ENCODE measurements at regions of chr1 and their contacts with region 1.

Region 1: GRCh38 chr1:166479052-166479631 is 312.3 kb upstream of the FAM78B start:
- DNase-seq: no peak
- H3K4me3 ChIP-seq: no peak overlapping the region
- H3K27ac ChIP-seq: no peak overlapping the region
- H3K4me1 ChIP-seq: no peaks in the 10 kb centered on the region
- H3K27me3 ChIP-seq: peaks cover 0 to 3% (median 0%) of the 10 kb centered on the region in 4 donors
- CTCF ChIP-seq: peak; percentile 45 to 73 (median 70)
- POLR2A ChIP-seq: no peak

Region 2: DNA sequence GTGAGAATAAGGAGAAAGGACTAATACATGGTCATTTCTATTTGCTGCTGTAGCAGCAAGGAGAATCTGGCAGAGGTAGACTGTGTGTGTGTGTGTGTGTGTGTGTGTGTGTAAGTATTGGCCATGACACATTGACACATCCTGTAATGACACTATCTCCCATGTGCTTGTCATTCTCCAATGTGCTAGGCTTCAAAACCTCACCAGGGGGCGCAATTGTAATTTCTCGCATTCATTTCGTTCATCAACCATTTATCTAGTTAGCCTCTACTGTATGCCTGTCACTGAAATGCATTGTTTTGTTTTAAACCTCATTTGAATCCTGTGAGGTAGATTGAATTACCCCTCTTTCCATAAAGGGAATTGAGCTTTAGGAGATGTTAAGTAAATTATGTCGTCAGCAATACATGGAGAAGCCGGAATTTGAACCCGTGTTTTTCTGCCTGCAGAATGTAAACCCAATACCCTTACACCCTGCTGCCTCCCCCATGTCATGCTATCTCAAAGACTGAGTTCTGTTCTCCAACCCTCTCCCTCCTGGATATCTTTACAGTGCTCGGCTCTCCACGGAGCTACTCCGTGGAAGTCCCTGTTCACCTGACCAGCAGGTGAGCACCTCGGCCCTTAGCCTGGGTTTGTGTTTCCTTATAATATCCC is 550.9 kb before region 1 on chr1:
- intact Hi-C with region 1: loop called (anchors 10 kb)
- DNase-seq: no peak
- H3K4me3 ChIP-seq: no peak overlapping the region
- H3K27ac ChIP-seq: no peak overlapping the region
- H3K4me1 ChIP-seq: no peaks in the 10 kb centered on the region
- H3K27me3 ChIP-seq: peaks cover 0 to 10% (median 0%) of the 10 kb centered on the region in 4 donors
- CTCF ChIP-seq: peak; percentile 23 to 74 (median 56)
- POLR2A ChIP-seq: no peak

Region 3: GRCh38 chr1:166418344-166418933 is 60.7 kb before region 1 on chr1:
- intact Hi-C with region 1: no loop called
- DNase-seq: no peak
- H3K4me3 ChIP-seq: no peak overlapping the region
- H3K27ac ChIP-seq: no peak overlapping the region
- H3K4me1 ChIP-seq: no peaks in the 10 kb centered on the region
- H3K27me3 ChIP-seq: no peaks in the 10 kb centered on the region
- CTCF ChIP-seq: no peak
- POLR2A ChIP-seq: no peak

Region 4: GRCh38 chr1:167499664-167500101 is 1020.5 kb after region 1 on chr1:
- intact Hi-C with region 1: no loop called
- DNase-seq: no peak
- H3K4me3 ChIP-seq: no peak overlapping the region
- H3K27ac ChIP-seq: no peak overlapping the region
- H3K4me1 ChIP-seq: peaks cover 0 to 18% (median 0%) of the 10 kb centered on the region in 3 donors
- H3K27me3 ChIP-seq: peaks cover 0 to 53% (median 0%) of the 10 kb centered on the region in 4 donors
- CTCF ChIP-seq: no peak
- POLR2A ChIP-seq: no peak

Measured in esophagus squamous epithelium (tissue), 5 donors.